Mucosa of descending colon (tissue), 3 donors: ENCODE measurements at regions of chr4 and their contacts with region 1.

Region 1: GRCh38 chr4:142353149-142353738 is 492.9 kb downstream of the INPP4B start:
- DNase-seq: peak in 1 of 3 donors; percentile 35
- ATAC-seq: peak; percentile 42
- H3K4me3 ChIP-seq: no peak overlapping the region
- H3K4me1 ChIP-seq: peaks cover 20% of the 10 kb centered on the region
- CTCF ChIP-seq: peak; percentile 73

Region 2: GRCh38 chr4:142238589-142238988 is 114.7 kb before region 1 on chr4:
- intact Hi-C with region 1: no loop called
- DNase-seq: no peak
- ATAC-seq: no peak
- H3K4me3 ChIP-seq: no peak overlapping the region
- H3K4me1 ChIP-seq: no peaks in the 10 kb centered on the region
- CTCF ChIP-seq: no peak

Region 3: DNA sequence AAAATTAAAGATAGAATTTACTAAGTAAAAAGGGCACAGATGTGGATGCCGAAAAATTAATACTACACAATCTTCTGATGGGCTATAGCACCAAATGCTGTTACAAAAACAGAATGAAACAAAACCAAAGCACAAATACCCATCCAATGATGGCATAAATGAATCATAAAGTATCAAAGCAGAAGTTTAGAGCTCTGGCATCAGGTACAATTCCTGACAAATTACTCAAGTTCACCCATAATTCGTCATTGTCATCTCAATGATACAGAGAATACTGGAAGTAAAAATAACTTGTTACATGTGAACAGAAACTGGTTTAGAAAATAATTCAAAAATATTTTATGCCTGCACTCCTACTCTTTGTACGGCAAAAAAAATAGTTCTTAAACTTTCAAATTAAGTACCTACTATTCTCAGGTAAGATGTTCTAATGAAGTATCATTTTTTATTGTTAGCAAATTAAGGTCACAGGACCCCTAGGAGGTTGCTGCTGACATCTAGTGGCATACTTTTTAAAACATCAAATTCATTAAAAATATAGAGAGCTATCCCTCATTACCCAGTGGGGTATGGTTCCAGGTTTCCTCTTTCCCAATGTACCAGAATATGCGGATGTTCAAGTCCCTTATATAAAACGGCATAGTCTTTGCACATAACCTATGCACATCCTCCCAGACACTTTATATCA is 366.8 kb after region 1 on chr4:
- intact Hi-C with region 1: loop called in 1 of 2 experiments (anchors 10 kb)
- DNase-seq: peak in 1 of 3 donors; percentile 10
- ATAC-seq: no peak
- H3K4me3 ChIP-seq: no peak overlapping the region
- H3K4me1 ChIP-seq: no peaks in the 10 kb centered on the region
- CTCF ChIP-seq: no peak